Activated CD4-positive, alpha-beta memory T cell treated with anti-CD3 and anti-CD28 coated beads for 36 hours (primary cell): ENCODE measurements at regions of chr2 and their contacts with region 1.

Region 1: GRCh38 chr2:234288974-234289455 is 207.9 kb downstream of the ARL4C start:
- DNase-seq: peak; percentile 87
- H3K4me3 Mint-ChIP-seq: peak overlapping the region; percentile 49
- H3K27ac Mint-ChIP-seq: peak overlapping the region; percentile 95
- H3K4me1 Mint-ChIP-seq: peaks cover 65% of the 10 kb centered on the region
- H3K27me3 Mint-ChIP-seq: no peaks in the 10 kb centered on the region

Region 2: DNA sequence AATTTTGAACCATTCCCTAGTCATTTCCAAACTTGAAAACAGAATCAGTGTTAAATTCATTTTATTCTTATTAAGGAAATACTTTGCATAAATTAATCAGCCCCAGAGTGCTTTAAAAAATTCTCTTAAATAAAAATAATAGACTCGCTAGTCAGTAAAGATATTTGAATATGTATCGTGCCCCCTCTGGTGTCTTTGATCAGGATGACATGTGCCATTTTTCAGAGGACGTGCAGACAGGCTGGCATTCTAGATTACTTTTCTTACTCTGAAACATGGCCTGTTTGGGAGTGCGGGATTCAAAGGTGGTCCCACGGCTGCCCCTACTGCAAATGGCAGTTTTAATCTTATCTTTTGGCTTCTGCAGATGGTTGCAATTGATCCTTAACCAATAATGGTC is 516.4 kb before region 1 on chr2:
- CTCF ChIA-PET with region 1: no interaction called
- POLR2A ChIA-PET with region 1: no interaction called
- intact Hi-C with region 1: no loop called
- DNase-seq: no peak
- H3K4me3 Mint-ChIP-seq: no peak overlapping the region
- H3K27ac Mint-ChIP-seq: no peak overlapping the region
- H3K4me1 Mint-ChIP-seq: no peaks in the 10 kb centered on the region
- H3K27me3 Mint-ChIP-seq: peaks cover 17% of the 10 kb centered on the region

Region 3: DNA sequence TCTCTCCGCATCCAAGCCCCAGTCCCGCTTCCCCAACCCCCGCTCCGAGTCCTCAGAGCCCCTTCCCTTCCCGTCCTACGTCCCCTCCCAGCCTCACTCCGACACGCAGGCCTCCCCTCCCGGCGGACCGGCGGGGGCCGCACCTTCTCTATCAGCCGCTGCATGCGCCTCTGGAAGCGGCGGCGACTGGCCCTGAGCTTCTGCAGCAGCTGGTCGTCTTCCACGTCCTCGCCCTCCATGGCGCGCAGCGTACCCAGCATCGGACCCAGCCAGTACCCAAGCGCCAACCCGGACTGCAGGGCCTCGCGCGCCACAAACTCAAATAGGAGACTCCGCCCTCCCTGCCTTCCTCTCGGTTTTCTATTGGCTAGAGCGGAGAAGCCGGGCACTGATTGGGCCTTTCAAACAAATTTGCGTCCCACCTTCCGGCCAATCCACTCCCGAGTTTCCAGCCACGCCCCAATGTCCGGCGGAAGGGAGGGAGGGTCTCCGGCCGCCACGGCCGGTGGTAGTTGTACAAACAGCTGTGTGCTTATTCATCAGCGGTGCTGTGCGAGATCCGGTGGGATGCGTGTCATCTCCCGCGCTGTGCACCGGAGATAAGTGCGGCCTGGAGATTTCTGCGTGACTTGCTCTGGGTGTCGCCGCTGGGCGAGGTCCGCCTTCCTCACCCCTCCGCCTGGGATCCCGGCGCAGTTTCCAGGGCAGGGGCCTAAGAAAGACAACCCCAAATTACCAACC is 434.6 kb before region 1 on chr2 and contains the start of gene HJURP:
- CTCF ChIA-PET with region 1: interaction called, 3 read pairs
- POLR2A ChIA-PET with region 1: no interaction called
- intact Hi-C with region 1: loop called (anchors 10 kb)
- DNase-seq: peak; percentile 97
- H3K4me3 Mint-ChIP-seq: peak within 1 kb of the TSS; percentile 92
- H3K27ac Mint-ChIP-seq: peak within 1 kb of the TSS; percentile 94
- H3K4me1 Mint-ChIP-seq: peaks cover 19% of the 10 kb centered on the region
- H3K27me3 Mint-ChIP-seq: peaks cover 1% of the 10 kb centered on the region
- total RNA-seq, gene HJURP: 98.4 to 102 TPM

Region 4: DNA sequence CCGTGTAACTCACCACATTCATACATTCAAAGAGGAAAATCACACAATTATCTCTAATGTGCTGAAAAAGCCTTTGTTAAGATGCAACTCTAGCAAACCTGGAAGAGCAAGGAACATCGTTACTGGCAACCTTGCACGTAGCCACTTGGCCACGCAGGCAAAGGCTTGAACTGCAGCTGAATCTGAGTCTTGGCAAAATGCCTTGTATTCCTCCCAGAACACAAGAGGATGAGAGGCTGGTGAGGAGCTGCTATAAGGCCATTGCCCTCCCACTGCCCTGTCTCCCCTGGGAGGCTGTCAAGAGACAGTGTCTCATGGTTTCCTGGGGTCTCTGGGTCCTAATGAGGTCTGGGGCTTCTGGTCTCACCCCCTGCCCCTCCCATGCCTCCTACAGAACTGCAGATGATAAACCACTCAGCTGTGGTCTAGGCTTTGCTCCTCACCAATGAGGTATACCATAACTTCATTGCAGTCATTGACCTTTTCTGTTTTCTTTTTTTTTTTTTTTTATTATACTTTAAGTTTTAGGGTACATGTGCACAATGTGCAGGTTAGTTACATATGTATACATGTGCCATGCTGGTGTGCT is 97.1 kb before region 1 on chr2:
- CTCF ChIA-PET with region 1: no interaction called
- POLR2A ChIA-PET with region 1: no interaction called
- intact Hi-C with region 1: no loop called
- DNase-seq: no peak
- H3K4me3 Mint-ChIP-seq: no peak overlapping the region
- H3K27ac Mint-ChIP-seq: no peak overlapping the region
- H3K4me1 Mint-ChIP-seq: no peaks in the 10 kb centered on the region
- H3K27me3 Mint-ChIP-seq: peaks cover 1% of the 10 kb centered on the region

Region 5: DNA sequence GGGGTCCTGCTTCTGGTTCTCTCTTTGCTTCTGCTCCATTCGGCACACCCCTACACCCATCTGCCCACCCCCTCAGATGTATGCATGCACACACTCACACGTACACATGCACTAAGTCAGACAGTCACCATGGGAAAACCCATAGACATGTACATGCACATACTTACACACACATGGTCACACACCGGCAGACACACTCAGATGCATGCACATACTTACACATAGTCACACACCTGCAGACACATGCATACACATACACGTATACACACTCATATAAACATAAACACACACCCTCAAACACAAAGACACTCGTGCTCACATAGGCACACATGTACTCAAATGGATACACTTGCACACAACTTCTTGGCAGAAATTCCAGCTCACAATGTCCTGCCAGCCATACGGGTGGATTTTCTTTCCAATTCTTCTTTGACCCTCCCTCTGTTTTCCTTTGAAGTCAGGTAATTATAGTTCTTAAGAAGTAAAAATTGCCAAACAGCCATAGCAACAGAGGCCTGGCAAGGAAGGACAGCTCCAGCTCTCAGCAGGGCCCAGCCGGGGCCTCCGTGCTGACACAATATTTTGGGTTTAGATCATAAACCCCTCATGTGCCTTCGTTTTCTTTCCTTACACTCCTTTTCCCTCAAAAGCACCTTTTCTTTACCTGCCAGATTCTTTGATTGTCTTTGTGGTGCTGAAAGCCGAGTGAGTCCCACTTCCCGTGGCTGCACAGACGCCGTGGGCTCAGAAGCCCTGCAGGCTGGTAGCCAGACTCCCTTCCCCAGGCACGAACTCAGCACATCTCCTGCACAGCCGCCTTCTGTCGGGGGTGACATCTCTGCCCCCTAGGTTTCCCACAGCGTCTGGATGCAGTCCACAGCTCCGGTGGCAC is 12.2 kb after region 1 on chr2:
- CTCF ChIA-PET with region 1: interaction called, 21 read pairs
- POLR2A ChIA-PET with region 1: interaction called, 4 read pairs
- intact Hi-C with region 1: no loop called
- DNase-seq: no peak
- H3K4me3 Mint-ChIP-seq: no peak overlapping the region
- H3K27ac Mint-ChIP-seq: no peak overlapping the region
- H3K4me1 Mint-ChIP-seq: peaks cover 53% of the 10 kb centered on the region
- H3K27me3 Mint-ChIP-seq: no peaks in the 10 kb centered on the region

Region 6: DNA sequence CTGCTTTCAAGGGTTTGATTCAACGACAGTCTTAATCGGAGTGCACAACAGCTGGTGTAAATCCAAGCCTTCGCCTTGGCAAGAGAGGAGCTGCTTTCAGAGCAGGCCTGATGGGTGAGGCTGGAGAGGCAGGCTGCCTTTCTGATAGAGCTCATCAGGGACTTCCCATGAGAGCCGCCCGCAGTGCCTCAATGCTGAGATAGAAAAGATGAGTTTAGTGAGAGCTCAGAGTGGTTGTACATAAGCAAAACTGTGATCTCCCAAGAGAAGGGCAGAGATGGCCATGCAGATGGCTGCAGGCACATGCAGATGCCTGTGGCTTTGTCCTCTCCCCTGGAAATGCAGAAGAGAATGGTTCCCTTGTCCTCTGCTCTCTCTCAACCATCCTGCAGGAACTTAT is 85.7 kb after region 1 on chr2:
- CTCF ChIA-PET with region 1: interaction called, 18 read pairs
- POLR2A ChIA-PET with region 1: no interaction called
- intact Hi-C with region 1: loop called (anchors 2 kb)
- DNase-seq: no peak
- H3K4me3 Mint-ChIP-seq: no peak overlapping the region
- H3K27ac Mint-ChIP-seq: no peak overlapping the region
- H3K4me1 Mint-ChIP-seq: peaks cover 54% of the 10 kb centered on the region
- H3K27me3 Mint-ChIP-seq: no peaks in the 10 kb centered on the region

Region 7: DNA sequence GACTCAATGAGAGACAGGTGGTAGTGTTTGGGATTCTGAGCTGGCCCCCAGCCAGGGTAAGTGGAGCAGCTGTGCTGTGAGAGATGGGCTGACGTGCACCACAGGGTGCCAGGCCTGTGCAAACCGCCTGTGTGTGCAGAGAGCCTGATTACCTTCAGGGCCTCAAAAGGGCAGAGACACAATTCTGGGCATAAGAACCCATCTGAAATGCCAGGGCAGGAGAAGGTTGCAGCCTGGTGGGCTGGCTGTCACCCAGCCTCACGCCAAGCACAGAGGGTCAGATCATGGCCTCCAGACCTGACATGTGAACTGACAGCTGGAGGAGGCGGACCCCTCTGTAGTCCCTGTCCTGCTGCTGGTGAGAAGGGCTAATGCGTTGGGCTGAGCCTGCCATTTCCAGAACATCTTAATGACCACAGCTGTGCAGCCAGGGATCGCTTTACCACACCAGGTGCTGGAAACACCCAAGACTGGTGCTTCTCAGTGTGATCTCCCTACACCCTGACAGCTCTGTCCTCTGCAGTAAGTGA is 106.9 kb after region 1 on chr2:
- CTCF ChIA-PET with region 1: no interaction called
- POLR2A ChIA-PET with region 1: no interaction called
- intact Hi-C with region 1: no loop called
- DNase-seq: no peak
- H3K4me3 Mint-ChIP-seq: no peak overlapping the region
- H3K27ac Mint-ChIP-seq: no peak overlapping the region
- H3K4me1 Mint-ChIP-seq: peaks cover 62% of the 10 kb centered on the region
- H3K27me3 Mint-ChIP-seq: no peaks in the 10 kb centered on the region

Region 8: GRCh38 chr2:234463626-234464290 is 174.7 kb after region 1 on chr2:
- CTCF ChIA-PET with region 1: interaction called, 8 read pairs
- POLR2A ChIA-PET with region 1: interaction called, 7 read pairs
- intact Hi-C with region 1: loop called (anchors 1 kb)
- DNase-seq: peak; percentile 85
- H3K4me3 Mint-ChIP-seq: peak overlapping the region; percentile 71
- H3K27ac Mint-ChIP-seq: peak overlapping the region; percentile 91
- H3K4me1 Mint-ChIP-seq: peaks cover 68% of the 10 kb centered on the region
- H3K27me3 Mint-ChIP-seq: no peaks in the 10 kb centered on the region

Region 9: DNA sequence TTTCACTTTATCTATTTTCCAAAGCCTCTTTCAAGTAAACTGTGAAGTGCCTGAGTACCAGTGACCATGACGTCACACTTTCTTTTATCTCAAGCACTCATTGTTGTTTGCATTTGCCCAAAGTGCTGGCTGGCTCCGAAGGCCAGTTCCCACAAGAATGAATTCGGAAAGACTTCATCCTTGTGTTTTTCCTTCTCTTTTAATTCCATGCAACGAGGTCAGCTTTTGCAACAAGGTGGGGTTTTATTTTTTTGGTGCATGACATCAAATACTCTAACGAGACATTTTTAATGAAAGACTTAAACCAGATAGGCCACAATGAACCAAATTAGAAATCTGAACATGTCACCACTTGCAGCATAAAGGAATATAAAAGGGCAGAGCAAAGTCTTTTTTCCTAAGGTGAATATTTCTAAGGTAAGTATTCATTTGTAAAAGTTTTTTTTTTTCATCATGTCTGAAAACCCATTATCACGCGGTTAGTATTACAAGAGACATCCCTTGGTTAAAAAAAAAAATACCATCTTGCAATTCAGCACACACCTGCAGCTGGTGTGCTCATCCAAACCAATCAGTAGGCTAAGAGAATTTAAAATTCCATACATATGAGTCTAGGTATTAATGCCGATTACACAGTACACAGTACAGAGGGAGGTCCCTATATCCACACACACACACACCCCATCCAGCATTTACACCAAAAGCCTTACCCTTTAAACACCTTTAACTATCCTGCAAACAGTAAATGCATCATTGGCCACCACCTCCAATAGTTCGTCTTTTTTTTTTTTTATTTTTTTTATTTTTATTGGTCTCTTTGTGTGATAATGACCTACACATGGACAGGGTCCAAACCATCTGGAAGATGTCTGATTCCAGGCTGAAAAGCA is 205.6 kb after region 1 on chr2:
- CTCF ChIA-PET with region 1: interaction called, 90 read pairs
- POLR2A ChIA-PET with region 1: interaction called, 93 read pairs
- intact Hi-C with region 1: loop called (anchors 1 kb)
- DNase-seq: no peak
- H3K4me3 Mint-ChIP-seq: peak overlapping the region; percentile 96
- H3K27ac Mint-ChIP-seq: peak overlapping the region; percentile 97
- H3K4me1 Mint-ChIP-seq: peaks cover 51% of the 10 kb centered on the region
- H3K27me3 Mint-ChIP-seq: no peaks in the 10 kb centered on the region